ENCODE measurements at regions of chr20 and their contacts with region 1.

Region 1: DNA sequence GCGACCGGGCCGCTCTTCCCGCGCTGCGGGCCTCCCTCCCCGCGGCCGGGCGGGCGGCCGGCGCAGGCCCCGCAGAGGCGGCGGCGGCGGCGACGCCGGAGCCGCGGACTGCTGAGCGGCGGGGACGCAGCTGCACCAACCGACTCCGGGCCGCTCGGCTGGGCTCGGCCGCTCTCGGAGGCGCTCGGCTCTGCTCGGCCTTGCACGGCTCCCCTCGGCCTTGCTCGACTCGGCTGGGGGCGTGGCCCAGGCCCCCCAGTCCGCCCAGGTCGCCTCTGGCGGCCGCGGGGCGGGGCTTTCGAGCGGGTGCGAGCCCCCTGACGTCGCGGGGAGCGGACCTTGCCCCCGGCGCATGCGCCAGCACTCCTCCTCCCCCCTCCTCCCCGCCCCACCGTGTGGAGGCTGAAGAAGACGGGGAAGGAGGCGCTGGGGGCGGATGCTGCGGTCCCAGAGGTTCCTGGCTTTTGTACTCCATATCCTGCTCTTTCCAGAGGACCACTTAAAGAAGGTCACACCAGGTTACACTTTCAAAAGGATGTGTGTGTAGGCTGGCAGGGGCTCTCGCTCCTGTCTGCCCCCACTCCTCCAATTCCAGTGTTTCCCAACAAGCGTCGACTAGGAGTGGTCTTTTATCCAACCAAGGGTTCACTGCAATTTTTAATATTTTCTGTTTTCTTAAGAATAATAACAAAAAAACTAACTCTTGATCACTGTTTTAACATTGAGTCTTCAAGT is at the start of gene ZHX3:
- DNase-seq: peak; percentile 97
- H3K4me3 ChIP-seq: peak within 1 kb of the TSS; percentile 76 to 84
- H3K27ac ChIP-seq: peak within 1 kb of the TSS; percentile 74 to 89
- H3K4me1 ChIP-seq: peaks cover 21% of the 10 kb centered on the region
- H3K27me3 ChIP-seq: no peaks in the 10 kb centered on the region
- CTCF ChIP-seq: no peak
- POLR2A ChIP-seq: no peak
- total RNA-seq, gene ZHX3: 35.1 to 55.7 TPM

Region 2: GRCh38 chr20:41249406-41250281 is 68.1 kb before region 1 on chr20:
- intact Hi-C with region 1: loop called (anchors 5 kb)
- DNase-seq: peak; percentile 60
- H3K4me3 ChIP-seq: no peak overlapping the region
- H3K27ac ChIP-seq: peak overlapping the region; percentile 73 to 89
- H3K4me1 ChIP-seq: peaks cover 38% of the 10 kb centered on the region
- H3K27me3 ChIP-seq: no peaks in the 10 kb centered on the region
- CTCF ChIP-seq: no peak
- POLR2A ChIP-seq: no peak

Measured in testis (tissue), 5 donors.